ENCODE measurements at regions of chr9 and their contacts with region 1.

Region 1: DNA sequence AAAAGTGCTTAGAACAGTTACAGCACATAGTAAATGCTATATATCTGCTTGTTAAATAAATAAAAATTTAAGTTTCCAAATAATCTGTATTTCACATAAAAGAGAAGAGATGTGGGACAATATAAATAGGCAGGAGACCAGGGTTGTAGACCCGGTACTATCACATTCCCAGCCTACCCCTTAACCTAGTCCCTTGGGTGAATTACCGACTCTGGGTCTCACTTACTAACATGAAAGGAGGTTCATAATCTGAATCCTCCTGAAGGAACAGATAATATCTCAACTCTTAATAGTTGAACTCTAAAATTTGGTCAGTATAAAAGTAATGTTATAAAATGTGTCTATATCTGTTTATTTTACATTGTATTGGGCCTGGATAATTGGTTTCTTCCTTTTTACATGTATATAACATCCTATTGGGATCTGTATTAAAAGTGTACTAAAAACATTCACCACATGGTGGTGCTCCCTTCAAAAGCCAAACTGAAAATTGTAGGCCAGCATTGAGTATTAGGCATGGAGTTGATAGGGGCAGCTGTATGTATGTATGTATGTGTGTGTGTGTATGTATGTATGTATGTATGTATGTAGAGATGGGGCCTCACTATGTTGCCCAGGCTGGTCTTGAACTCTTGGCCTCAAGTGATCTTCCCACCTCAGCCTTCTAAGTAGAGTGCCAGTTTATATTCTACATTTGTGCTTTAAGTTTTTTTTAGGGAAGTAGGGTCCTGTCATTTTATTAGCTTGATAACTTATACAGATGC is 64.2 kb upstream of the ABL1 start:
- DNase-seq: no peak
- H3K4me3 ChIP-seq: no peak overlapping the region
- H3K27ac ChIP-seq: no peak overlapping the region
- H3K4me1 ChIP-seq: peaks cover 19 to 37% of the 10 kb centered on the region in 2 donors
- H3K27me3 ChIP-seq: no peaks in the 10 kb centered on the region
- CTCF ChIP-seq: peak; percentile 21 to 84 (median 66)
- POLR2A ChIP-seq: no peak

Region 2: DNA sequence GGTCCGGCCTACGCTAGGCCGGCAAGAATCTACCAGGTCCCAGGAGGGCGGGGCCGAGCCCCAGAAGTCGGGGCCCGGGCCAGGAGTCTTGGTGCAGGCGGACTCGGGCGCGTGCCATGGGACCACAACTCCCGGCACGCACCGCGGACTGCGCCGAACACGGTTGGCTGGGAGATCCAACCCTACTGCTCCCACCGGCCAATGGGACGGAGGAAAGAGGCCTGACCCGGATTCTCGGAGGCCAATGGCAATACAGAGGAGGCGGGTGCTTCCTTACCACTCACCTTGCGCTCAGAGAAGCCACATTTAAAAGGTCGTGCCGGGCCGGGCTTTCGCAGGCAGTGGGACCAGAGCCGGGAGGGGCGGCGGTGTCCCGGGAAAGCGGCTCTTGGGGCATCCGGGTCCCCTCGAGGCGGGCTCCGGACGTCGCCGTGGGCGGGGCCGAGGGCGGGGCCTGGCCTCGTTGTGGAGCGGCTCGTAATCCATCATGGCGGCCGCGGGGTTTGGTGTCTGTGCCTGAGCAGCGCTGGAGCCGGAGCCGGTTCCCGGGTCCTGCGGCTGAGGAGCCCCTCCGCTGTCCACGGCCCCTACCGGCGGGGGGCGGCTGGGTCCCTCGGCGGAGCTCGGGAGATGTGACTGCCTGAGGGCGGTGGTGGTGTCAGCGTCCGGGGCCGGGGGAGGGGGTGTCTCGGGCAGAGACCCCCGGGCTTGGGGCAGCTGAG is 58.1 kb before region 1 on chr9:
- intact Hi-C with region 1: loop called (anchors 10 kb)
- DNase-seq: peak; percentile 99 to 100
- H3K4me3 ChIP-seq: peak overlapping the region; percentile 51 to 93 (median 87)
- H3K27ac ChIP-seq: peak overlapping the region; percentile 84 to 98 (median 96)
- H3K4me1 ChIP-seq: peaks cover 17 to 19% of the 10 kb centered on the region in 2 donors
- H3K27me3 ChIP-seq: no peaks in the 10 kb centered on the region
- CTCF ChIP-seq: no peak
- POLR2A ChIP-seq: peak; percentile 74 to 91

Region 3: DNA sequence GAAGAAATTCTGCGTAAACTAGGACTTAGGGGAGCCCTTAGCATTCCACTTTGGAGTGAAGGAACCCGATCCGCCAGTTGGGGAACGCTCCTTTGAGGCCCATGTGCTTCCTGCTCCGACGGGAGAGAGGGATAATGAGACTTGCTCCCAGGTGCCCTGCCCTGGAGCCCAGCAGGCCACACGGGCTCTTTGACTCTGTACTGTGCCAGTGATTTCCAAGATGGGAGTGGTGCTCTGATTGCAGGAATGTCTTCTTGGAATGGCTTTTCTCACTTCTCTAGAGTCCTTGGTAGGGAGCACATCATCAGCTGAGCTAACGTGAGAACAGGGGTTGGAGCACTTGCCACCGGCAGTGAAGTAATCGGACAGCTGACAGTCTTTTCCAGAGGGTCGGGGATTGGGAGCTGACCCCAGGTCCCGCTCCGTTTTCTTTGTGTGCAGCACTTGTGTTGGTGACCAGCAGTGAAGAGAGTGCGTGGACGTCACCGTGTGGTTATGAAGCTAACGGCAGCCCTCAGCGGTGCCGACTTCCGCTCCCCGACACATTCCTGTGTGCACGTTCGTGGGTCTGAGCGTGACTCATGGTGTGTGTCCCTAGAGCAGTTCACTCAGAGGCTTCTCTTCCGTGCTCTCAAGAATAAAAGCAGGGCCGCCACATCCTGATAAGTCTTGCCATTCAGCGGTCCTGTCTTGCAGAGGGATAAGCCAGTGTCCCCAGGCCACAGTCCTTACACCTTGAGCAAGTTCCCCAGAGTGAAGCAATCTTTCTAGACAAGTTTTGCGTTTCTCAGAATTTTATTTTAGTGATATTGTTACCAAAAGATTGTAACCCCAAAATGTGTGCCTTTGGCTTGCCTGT is 89.8 kb after region 1 on chr9:
- intact Hi-C with region 1: loop called (anchors 5 kb)
- DNase-seq: peak; percentile 96
- H3K4me3 ChIP-seq: no peak overlapping the region
- H3K27ac ChIP-seq: peak overlapping the region; percentile 88 to 94 (median 93)
- H3K4me1 ChIP-seq: peaks cover 41 to 50% of the 10 kb centered on the region in 2 donors
- H3K27me3 ChIP-seq: no peaks in the 10 kb centered on the region
- CTCF ChIP-seq: peak in 4 of 6 experiments; percentile 38 to 57 (median 50)
- POLR2A ChIP-seq: peak in 1 of 2 donors; percentile 42

Region 4: DNA sequence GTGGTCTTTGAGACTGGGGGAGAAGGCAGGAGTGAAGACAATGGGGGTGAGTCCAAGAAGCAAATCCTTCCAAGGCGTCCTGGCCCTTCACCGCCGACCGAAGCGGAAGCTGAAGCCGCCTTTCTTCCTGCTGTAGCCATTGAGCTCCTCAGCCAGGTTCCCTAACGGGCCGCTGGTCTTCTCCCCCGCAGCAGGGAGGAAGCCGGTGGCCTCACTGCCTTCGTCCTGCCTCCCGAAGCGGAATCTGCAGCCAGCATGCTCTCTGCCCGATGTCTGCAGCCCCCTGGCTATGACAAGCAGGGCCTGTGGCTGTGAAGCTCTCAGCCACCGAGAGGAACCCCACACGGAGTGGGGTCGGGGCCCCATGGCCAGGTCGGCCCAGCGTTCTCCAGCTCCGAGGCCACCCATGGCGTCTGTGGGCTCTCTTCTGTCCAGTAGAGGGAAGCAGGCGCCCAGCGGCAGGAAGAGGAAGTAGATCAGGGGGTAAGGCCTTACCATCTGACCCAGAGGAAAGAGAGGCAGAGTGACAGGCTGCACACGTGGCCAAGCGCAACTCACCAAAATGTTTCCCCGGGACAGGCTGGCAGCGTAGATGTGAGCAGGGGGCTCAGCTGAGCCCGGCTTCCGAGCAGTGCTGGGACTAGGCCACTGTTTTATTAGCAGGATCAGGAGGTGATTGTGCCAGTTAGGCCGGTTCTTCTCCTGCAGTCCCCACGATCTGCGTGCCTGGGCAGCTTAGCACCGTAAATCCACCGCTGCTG is 122.7 kb after region 1 on chr9:
- intact Hi-C with region 1: no loop called
- DNase-seq: no peak
- H3K4me3 ChIP-seq: no peak overlapping the region
- H3K27ac ChIP-seq: no peak overlapping the region
- H3K4me1 ChIP-seq: peaks cover 0 to 8% of the 10 kb centered on the region in 2 donors
- H3K27me3 ChIP-seq: no peaks in the 10 kb centered on the region
- CTCF ChIP-seq: no peak
- POLR2A ChIP-seq: no peak

Region 5: GRCh38 chr9:130940693-130941576 is 170.1 kb after region 1 on chr9:
- intact Hi-C with region 1: loop called (anchors 5 kb)
- DNase-seq: peak; percentile 87 to 89
- H3K4me3 ChIP-seq: no peak overlapping the region
- H3K27ac ChIP-seq: no peak overlapping the region
- H3K4me1 ChIP-seq: peaks cover 9 to 28% of the 10 kb centered on the region in 2 donors
- H3K27me3 ChIP-seq: peaks cover 9% of the 10 kb centered on the region
- CTCF ChIP-seq: peak; percentile 77 to 96 (median 85)
- POLR2A ChIP-seq: no peak

Measured in thyroid gland (tissue), 4 donors.